T-cell (primary cell): ENCODE measurements at regions of chr15 and their contacts with region 1.

Region 1: DNA sequence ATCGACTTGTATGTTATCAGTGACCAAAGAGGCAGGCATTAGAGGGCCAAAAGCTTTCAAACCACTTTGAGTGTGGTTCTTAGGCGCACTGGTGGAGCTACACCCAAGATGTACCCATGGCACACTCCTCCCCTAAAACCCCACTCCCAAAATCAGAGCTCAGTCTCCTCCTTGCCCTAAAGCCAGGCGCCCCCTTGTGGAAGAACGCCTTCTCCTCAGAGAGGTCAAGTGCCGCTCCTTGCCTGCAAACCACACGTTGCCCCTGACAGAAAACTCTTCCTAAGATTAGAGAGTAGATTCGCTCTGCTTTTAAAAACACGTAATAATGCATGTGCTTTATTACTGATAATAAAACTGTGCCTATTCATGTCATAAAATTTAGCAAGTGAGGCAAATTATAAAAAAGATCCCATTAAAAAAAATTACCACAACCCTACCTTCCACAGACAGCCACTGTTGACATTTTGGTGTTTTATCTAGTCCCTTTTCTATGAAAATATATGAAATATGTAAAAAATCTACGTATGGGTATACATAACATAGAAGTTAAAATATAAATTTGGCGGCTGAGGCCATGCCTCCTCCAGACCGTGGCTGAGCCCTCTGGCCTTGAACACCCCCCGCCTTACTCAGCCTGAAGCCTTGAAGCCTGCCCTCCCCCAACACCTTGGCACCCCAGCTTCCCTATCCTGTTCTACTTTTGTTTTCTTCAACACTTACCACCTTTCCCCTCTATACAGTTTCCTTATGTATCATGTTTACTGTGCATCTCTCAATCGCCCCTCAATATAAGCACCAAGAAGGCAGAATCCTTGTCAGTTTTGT is 33.5 kb downstream of the BCL2L10 start:
- DNase-seq: peak; percentile 39 to 90 (median 76)
- ATAC-seq: peak; percentile 77 to 87 (median 83)
- H3K4me3 ChIP-seq: no peak overlapping the region
- H3K4me3 Mint-ChIP-seq: no peak overlapping the region
- H3K27ac ChIP-seq: no peak overlapping the region
- H3K27ac Mint-ChIP-seq: no peak overlapping the region
- H3K4me1 ChIP-seq: peaks cover 0 to 13% of the 10 kb centered on the region in 2 experiments
- H3K4me1 Mint-ChIP-seq: peaks cover 13 to 18% (median 14%) of the 10 kb centered on the region in 3 donors
- H3K27me3 ChIP-seq: peaks cover 0 to 2% of the 10 kb centered on the region in 2 experiments
- H3K27me3 Mint-ChIP-seq: no peaks in the 10 kb centered on the region

Region 2: DNA sequence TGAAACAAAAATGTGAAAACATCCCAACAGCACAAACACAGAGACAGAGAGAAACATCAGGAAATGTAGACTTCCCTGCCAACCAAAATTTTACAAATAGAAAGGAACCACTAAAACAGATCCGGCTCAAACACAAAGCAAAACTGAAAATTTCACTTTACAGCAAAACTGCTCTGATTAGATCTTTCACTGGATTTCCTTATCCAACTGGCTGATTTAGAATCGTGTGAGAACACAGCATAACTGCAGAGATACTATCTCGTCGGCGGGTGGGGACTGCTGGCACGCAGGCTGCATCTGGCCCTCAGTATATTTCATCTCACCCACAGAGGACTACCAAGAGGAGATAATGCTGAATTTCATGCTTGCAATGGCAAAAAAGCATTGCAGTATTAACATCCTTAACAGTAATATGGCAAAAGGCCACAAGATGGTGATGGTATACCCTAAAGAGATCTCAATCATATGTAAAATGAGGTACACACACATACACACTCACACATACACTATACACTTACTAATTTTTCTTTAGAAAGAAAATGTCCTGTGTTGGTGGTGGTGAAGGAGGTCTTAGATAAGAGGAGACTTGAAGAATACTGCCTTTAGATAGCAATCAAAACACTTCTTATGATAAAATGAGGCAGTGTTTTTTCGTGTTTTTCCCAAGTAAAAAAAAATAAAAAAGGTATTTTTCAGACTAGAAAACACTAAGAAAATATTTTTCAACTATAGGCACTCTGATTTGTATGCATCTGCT is 96.9 kb before region 1 on chr15:
- CTCF ChIA-PET with region 1: interaction called, 11 to 21 read pairs
- POLR2A ChIA-PET with region 1: no interaction called
- DNase-seq: peak in 29 of 35 experiments; percentile 3 to 80 (median 16)
- ATAC-seq: peak; percentile 88 to 98 (median 96)
- H3K4me3 ChIP-seq: no peak overlapping the region
- H3K4me3 Mint-ChIP-seq: peak overlapping the region; percentile 48 to 68 (median 67)
- H3K27ac ChIP-seq: no peak overlapping the region
- H3K27ac Mint-ChIP-seq: peak overlapping the region; percentile 88 to 90
- H3K4me1 ChIP-seq: peaks cover 6 to 9% of the 10 kb centered on the region in 2 experiments
- H3K4me1 Mint-ChIP-seq: peaks cover 10 to 15% (median 11%) of the 10 kb centered on the region in 3 donors
- H3K27me3 ChIP-seq: peaks cover 0 to 5% of the 10 kb centered on the region in 2 experiments
- H3K27me3 Mint-ChIP-seq: no peaks in the 10 kb centered on the region

Region 3: DNA sequence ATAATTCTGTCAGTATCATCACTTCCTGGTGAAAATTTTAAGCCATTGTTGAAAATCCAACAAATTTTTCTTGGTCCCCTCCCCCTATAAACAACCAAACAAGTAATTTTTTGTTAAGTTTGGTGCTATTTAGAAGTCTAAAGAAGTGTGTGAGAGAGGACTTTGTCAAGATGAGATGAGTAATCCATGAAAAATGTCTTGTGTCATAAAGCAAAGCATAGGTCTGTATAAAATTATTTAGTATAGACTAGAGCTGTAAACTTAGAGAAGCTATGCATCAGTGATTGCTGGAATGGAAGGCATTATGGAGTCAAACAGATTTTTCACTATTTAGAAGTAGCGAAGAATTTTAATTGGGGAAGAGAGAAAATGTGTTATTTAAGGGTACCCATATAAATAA is 28.7 kb before region 1 on chr15:
- CTCF ChIA-PET with region 1: interaction called, 3 to 16 read pairs
- POLR2A ChIA-PET with region 1: interaction called in 1 of 2 experiments, 3 read pairs
- DNase-seq: no peak
- ATAC-seq: no peak
- H3K4me3 ChIP-seq: no peak overlapping the region
- H3K4me3 Mint-ChIP-seq: no peak overlapping the region
- H3K27ac ChIP-seq: no peak overlapping the region
- H3K27ac Mint-ChIP-seq: no peak overlapping the region
- H3K4me1 ChIP-seq: peaks cover 7 to 9% of the 10 kb centered on the region in 2 experiments
- H3K4me1 Mint-ChIP-seq: peaks cover 15 to 25% (median 21%) of the 10 kb centered on the region in 3 donors
- H3K27me3 ChIP-seq: no peaks in the 10 kb centered on the region
- H3K27me3 Mint-ChIP-seq: no peaks in the 10 kb centered on the region

Region 4: GRCh38 chr15:52158084-52158765 is 79.1 kb after region 1 on chr15:
- CTCF ChIA-PET with region 1: no interaction called
- POLR2A ChIA-PET with region 1: no interaction called
- DNase-seq: no peak
- ATAC-seq: no peak
- H3K4me3 ChIP-seq: no peak overlapping the region
- H3K4me3 Mint-ChIP-seq: no peak overlapping the region
- H3K27ac ChIP-seq: no peak overlapping the region
- H3K27ac Mint-ChIP-seq: no peak overlapping the region
- H3K4me1 ChIP-seq: no peaks in the 10 kb centered on the region
- H3K4me1 Mint-ChIP-seq: peaks cover 4 to 20% (median 4%) of the 10 kb centered on the region in 3 donors
- H3K27me3 ChIP-seq: no peaks in the 10 kb centered on the region
- H3K27me3 Mint-ChIP-seq: no peaks in the 10 kb centered on the region